CD4-positive, alpha-beta memory T cell (primary cell): ENCODE measurements at regions of chr18 and their contacts with region 1.

Region 1: GRCh38 chr18:58671111-58671631 is at the start of gene MALT1:
- DNase-seq: peak; percentile 91 to 94 (median 93)
- H3K4me3 ChIP-seq: peak within 1 kb of the TSS; percentile 55 to 64
- H3K4me3 Mint-ChIP-seq: peak within 1 kb of the TSS; percentile 92 to 97 (median 96)
- H3K27ac ChIP-seq: peak within 1 kb of the TSS; percentile 78
- H3K27ac Mint-ChIP-seq: peak within 1 kb of the TSS; percentile 90 to 97 (median 96)
- H3K4me1 ChIP-seq: peaks cover 54% of the 10 kb centered on the region
- H3K4me1 Mint-ChIP-seq: peaks cover 45 to 65% (median 53%) of the 10 kb centered on the region in 4 donors
- H3K27me3 ChIP-seq: no peaks in the 10 kb centered on the region
- H3K27me3 Mint-ChIP-seq: no peaks in the 10 kb centered on the region
- total RNA-seq, gene MALT1: 90.4 to 96.7 TPM

Region 2: GRCh38 chr18:58484989-58485981 is 185.9 kb before region 1 on chr18:
- CTCF ChIA-PET with region 1: no interaction called
- POLR2A ChIA-PET with region 1: no interaction called
- intact Hi-C with region 1: no loop called
- DNase-seq: no peak
- H3K4me3 ChIP-seq: no peak overlapping the region
- H3K4me3 Mint-ChIP-seq: peak overlapping the region in 1 of 8 donors; percentile 48
- H3K27ac ChIP-seq: no peak overlapping the region
- H3K27ac Mint-ChIP-seq: peak overlapping the region in 1 of 7 donors; percentile 64
- H3K4me1 ChIP-seq: no peaks in the 10 kb centered on the region
- H3K4me1 Mint-ChIP-seq: no peaks in the 10 kb centered on the region
- H3K27me3 ChIP-seq: peaks cover 8% of the 10 kb centered on the region
- H3K27me3 Mint-ChIP-seq: peaks cover 3 to 8% of the 10 kb centered on the region in 2 donors

Region 3: DNA sequence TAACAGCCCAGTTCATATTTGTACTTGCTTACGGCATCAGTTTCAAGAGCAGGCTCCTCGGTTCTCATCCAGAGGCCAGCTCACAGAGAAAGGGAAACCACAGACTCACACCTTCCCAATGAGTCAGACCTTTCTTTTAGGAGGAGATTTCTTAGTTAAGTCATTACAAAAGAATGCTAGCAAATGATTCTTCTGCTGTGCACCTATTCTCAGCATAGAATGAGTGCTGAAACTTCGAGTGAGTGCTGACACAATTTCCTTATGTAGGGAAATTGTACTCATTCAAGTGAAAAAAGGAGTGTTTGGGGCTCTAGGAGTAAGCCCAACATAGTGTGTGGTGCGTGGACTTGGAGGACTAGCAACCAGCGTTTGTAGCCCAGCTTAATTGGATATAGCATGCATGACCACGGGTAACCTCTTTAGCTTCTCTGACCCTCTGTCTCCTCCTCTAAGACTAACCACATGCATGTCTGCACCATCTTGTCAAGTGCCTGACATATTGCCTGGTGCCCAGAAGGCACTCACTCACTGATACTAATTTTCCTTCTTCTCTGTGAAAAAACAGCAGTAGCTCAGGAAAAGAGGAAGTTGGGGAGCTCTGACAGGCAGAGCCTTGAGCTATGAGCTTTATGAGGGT is 129.3 kb before region 1 on chr18:
- CTCF ChIA-PET with region 1: interaction called, 10 read pairs
- POLR2A ChIA-PET with region 1: interaction called, 30 read pairs
- intact Hi-C with region 1: no loop called
- DNase-seq: peak; percentile 17 to 77 (median 37)
- H3K4me3 ChIP-seq: no peak overlapping the region
- H3K4me3 Mint-ChIP-seq: peak overlapping the region in 5 of 8 donors; percentile 38 to 65 (median 52)
- H3K27ac ChIP-seq: no peak overlapping the region
- H3K27ac Mint-ChIP-seq: peak overlapping the region in 6 of 7 donors; percentile 1 to 90 (median 70)
- H3K4me1 ChIP-seq: peaks cover 21% of the 10 kb centered on the region
- H3K4me1 Mint-ChIP-seq: peaks cover 21 to 31% (median 23%) of the 10 kb centered on the region in 4 donors
- H3K27me3 ChIP-seq: no peaks in the 10 kb centered on the region
- H3K27me3 Mint-ChIP-seq: no peaks in the 10 kb centered on the region

Region 4: DNA sequence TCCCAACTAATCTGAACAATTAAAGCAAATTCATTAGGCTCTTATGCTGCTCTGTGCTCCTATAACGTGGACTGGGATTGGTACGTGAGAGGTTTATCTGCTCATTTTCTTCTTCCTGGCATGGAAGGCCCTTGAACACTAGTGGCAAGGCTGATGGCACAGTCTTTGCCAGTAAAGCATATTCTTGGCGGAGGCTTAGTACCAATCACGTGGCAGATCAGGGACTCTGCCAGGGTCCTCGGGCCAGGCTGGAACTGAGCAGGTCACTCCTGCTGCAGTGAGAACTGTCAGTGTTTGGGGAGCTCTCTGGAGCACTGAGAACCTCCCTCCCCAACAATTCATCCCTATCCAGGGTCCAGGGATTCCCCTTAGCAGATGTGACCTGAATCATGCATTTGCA is 38.6 kb before region 1 on chr18:
- CTCF ChIA-PET with region 1: interaction called, 4 read pairs
- POLR2A ChIA-PET with region 1: interaction called, 25 read pairs
- intact Hi-C with region 1: no loop called
- DNase-seq: no peak
- H3K4me3 ChIP-seq: no peak overlapping the region
- H3K4me3 Mint-ChIP-seq: no peak overlapping the region
- H3K27ac ChIP-seq: no peak overlapping the region
- H3K27ac Mint-ChIP-seq: peak overlapping the region in 1 of 7 donors; percentile 56
- H3K4me1 ChIP-seq: peaks cover 16% of the 10 kb centered on the region
- H3K4me1 Mint-ChIP-seq: peaks cover 14 to 30% (median 23%) of the 10 kb centered on the region in 4 donors
- H3K27me3 ChIP-seq: no peaks in the 10 kb centered on the region
- H3K27me3 Mint-ChIP-seq: no peaks in the 10 kb centered on the region

Region 5: GRCh38 chr18:58687871-58688308 is 16.7 kb after region 1 on chr18:
- CTCF ChIA-PET with region 1: interaction called, 19 read pairs
- POLR2A ChIA-PET with region 1: interaction called, 344 read pairs
- intact Hi-C with region 1: loop called (anchors 1 kb)
- DNase-seq: peak; percentile 85 to 93 (median 91)
- H3K4me3 ChIP-seq: peak overlapping the region in 1 of 2 donors; percentile 21
- H3K4me3 Mint-ChIP-seq: peak overlapping the region; percentile 73 to 86 (median 81)
- H3K27ac ChIP-seq: peak overlapping the region; percentile 64
- H3K27ac Mint-ChIP-seq: peak overlapping the region; percentile 90 to 98 (median 96)
- H3K4me1 ChIP-seq: peaks cover 84% of the 10 kb centered on the region
- H3K4me1 Mint-ChIP-seq: peaks cover 58 to 77% (median 65%) of the 10 kb centered on the region in 4 donors
- H3K27me3 ChIP-seq: no peaks in the 10 kb centered on the region
- H3K27me3 Mint-ChIP-seq: no peaks in the 10 kb centered on the region

Region 6: DNA sequence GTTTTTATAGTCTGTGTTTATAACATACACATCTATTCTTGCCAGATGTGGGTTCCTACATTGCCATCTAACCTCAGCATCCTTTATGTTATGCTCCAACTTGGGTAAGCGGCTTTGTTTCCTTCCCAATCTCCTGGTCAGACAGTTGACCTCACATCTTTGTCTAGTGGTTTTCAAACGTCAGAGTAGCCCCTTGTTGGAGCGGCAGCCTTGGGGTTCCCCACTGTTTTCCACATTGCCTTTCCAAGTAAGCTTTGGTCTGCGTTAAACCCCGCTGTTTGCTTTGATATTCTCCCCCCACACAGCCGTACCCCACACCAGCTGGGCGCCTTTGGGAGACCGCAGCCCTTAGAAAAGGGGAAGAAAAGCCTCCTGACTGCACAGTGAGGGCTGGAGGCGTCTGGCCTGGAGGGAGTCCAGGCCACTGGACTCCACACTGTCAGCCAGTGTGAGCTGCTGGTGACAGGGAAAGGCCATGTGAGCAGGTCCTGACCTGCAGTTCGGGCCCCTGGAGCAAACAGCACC is 83.4 kb after region 1 on chr18:
- CTCF ChIA-PET with region 1: interaction called, 3 read pairs
- POLR2A ChIA-PET with region 1: interaction called, 25 read pairs
- intact Hi-C with region 1: no loop called
- DNase-seq: no peak
- H3K4me3 ChIP-seq: no peak overlapping the region
- H3K4me3 Mint-ChIP-seq: no peak overlapping the region
- H3K27ac ChIP-seq: no peak overlapping the region
- H3K27ac Mint-ChIP-seq: peak overlapping the region in 4 of 7 donors; percentile 1 to 74 (median 54)
- H3K4me1 ChIP-seq: peaks cover 10% of the 10 kb centered on the region
- H3K4me1 Mint-ChIP-seq: peaks cover 12 to 36% (median 31%) of the 10 kb centered on the region in 4 donors
- H3K27me3 ChIP-seq: no peaks in the 10 kb centered on the region
- H3K27me3 Mint-ChIP-seq: no peaks in the 10 kb centered on the region

Region 7: GRCh38 chr18:59139371-59140298 is 468.5 kb after region 1 on chr18 and contains the start of gene SEC11C:
- CTCF ChIA-PET with region 1: no interaction called
- POLR2A ChIA-PET with region 1: interaction called, 7 read pairs
- intact Hi-C with region 1: loop called (anchors 1 kb)
- DNase-seq: peak; percentile 98 to 99 (median 98)
- H3K4me3 ChIP-seq: peak within 1 kb of the TSS; percentile 59 to 88
- H3K4me3 Mint-ChIP-seq: peak within 1 kb of the TSS; percentile 92 to 97 (median 95)
- H3K27ac ChIP-seq: peak within 1 kb of the TSS; percentile 91
- H3K27ac Mint-ChIP-seq: peak within 1 kb of the TSS; percentile 99 to 100 (median 100)
- H3K4me1 ChIP-seq: peaks cover 45% of the 10 kb centered on the region
- H3K4me1 Mint-ChIP-seq: peaks cover 29 to 53% (median 39%) of the 10 kb centered on the region in 4 donors
- H3K27me3 ChIP-seq: no peaks in the 10 kb centered on the region
- H3K27me3 Mint-ChIP-seq: peaks cover 6 to 7% of the 10 kb centered on the region in 2 donors
- total RNA-seq, gene SEC11C: 85.1 to 89.3 TPM